Heart left ventricle (tissue), 16 donors: ENCODE measurements at regions of chr14 and their contacts with region 1.

Region 1: GRCh38 chr14:68248481-68249255 is 429.1 kb downstream of the RAD51B start:
- DNase-seq: peak in 3 of 5 donors; percentile 32 to 66 (median 39)
- ATAC-seq: peak; percentile 56 to 75 (median 70)
- H3K4me3 ChIP-seq: no peak overlapping the region
- H3K27ac ChIP-seq: peak overlapping the region in 11 of 12 donors; percentile 23 to 91 (median 85)
- H3K4me1 ChIP-seq: peaks cover 17 to 84% (median 78%) of the 10 kb centered on the region in 12 donors
- H3K27me3 ChIP-seq: no peaks in the 10 kb centered on the region
- CTCF ChIP-seq: peak; percentile 54 to 80 (median 68)
- POLR2A ChIP-seq: no peak

Region 2: DNA sequence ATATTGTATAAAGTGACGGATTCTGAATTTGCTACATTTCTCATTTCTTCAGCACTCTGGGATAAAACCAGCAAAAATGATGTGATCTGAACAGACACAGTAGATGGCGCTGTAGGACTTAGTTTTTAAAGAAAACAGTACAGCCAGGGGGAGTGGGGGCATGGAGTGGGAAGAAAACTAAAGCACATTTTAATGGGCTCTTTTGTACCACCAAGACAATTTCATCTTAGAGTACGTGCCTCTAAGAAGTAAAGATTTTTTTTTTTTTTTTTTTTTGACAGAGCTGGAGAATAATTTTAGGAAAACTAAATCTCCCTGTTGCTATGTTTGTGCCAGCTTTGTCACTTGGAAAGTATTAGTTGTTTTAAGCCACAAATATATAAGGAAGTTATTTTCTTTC is 304.7 kb before region 1 on chr14:
- intact Hi-C with region 1: loop called in 9 of 10 experiments (anchors 2 to 5 kb)
- DNase-seq: peak in 4 of 5 donors; percentile 70 to 76 (median 72)
- ATAC-seq: peak; percentile 44 to 76 (median 68)
- H3K4me3 ChIP-seq: no peak overlapping the region
- H3K27ac ChIP-seq: peak overlapping the region in 5 of 12 donors; percentile 16 to 82 (median 47)
- H3K4me1 ChIP-seq: peaks cover 0 to 49% (median 23%) of the 10 kb centered on the region in 12 donors
- H3K27me3 ChIP-seq: no peaks in the 10 kb centered on the region
- CTCF ChIP-seq: peak; percentile 58 to 82 (median 76)
- POLR2A ChIP-seq: no peak

Region 3: GRCh38 chr14:68359837-68360552 is 111.3 kb after region 1 on chr14:
- intact Hi-C with region 1: loop called in 1 of 10 experiments (anchors 10 kb)
- DNase-seq: peak; percentile 37 to 71 (median 56)
- ATAC-seq: peak; percentile 69 to 88 (median 75)
- H3K4me3 ChIP-seq: no peak overlapping the region
- H3K27ac ChIP-seq: peak overlapping the region in 10 of 12 donors; percentile 35 to 85 (median 58)
- H3K4me1 ChIP-seq: peaks cover 0 to 60% (median 13%) of the 10 kb centered on the region in 12 donors
- H3K27me3 ChIP-seq: no peaks in the 10 kb centered on the region
- CTCF ChIP-seq: no peak
- POLR2A ChIP-seq: no peak

Region 4: GRCh38 chr14:68426661-68427549 is 178.2 kb after region 1 on chr14:
- intact Hi-C with region 1: no loop called
- DNase-seq: no peak
- ATAC-seq: peak in 1 of 4 donors; percentile 15
- H3K4me3 ChIP-seq: no peak overlapping the region
- H3K27ac ChIP-seq: no peak overlapping the region
- H3K4me1 ChIP-seq: peaks cover 0 to 6% (median 0%) of the 10 kb centered on the region in 12 donors
- H3K27me3 ChIP-seq: no peaks in the 10 kb centered on the region
- CTCF ChIP-seq: no peak
- POLR2A ChIP-seq: no peak

Region 5: DNA sequence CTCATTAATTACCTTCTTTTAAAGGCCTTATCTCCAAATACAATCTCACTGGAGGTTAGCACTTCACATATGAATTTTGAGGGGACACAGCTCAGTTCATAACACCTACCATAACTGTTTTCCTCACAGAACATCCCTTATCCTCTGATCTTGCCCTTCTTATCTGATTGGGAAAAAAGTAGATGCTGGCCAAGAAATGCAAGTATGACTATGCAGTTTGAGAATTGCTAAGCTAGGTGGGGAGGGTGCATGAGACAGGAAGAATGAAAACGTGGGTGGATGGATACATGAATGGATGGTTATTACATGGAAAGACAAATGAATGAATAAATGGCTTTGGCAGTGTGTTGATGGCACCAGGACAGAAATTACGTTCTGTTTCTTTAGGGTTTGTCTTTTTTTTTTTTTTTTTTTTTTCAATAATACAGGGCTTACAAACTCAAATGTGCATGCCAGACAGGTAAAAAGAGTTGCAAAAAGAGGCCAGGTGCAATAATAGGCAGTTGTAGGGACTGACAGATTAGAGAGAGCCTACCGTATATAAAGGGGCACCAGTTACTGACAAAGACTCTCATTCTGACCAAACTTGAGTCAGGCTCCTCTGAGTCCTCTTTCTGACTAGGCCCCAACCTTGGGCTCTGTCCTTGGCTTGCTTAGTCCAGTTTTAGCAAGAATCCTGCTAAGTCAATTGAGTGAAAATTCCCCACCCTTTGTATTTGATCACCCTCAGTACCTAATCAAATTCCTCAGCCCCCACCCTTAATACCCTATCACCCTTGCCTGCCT is 239.3 kb after region 1 on chr14:
- intact Hi-C with region 1: loop called in 1 of 10 experiments (anchors 10 kb)
- DNase-seq: no peak
- ATAC-seq: no peak
- H3K4me3 ChIP-seq: no peak overlapping the region
- H3K27ac ChIP-seq: no peak overlapping the region
- H3K4me1 ChIP-seq: peaks cover 0 to 23% (median 4%) of the 10 kb centered on the region in 12 donors
- H3K27me3 ChIP-seq: no peaks in the 10 kb centered on the region
- CTCF ChIP-seq: no peak
- POLR2A ChIP-seq: no peak

Region 6: DNA sequence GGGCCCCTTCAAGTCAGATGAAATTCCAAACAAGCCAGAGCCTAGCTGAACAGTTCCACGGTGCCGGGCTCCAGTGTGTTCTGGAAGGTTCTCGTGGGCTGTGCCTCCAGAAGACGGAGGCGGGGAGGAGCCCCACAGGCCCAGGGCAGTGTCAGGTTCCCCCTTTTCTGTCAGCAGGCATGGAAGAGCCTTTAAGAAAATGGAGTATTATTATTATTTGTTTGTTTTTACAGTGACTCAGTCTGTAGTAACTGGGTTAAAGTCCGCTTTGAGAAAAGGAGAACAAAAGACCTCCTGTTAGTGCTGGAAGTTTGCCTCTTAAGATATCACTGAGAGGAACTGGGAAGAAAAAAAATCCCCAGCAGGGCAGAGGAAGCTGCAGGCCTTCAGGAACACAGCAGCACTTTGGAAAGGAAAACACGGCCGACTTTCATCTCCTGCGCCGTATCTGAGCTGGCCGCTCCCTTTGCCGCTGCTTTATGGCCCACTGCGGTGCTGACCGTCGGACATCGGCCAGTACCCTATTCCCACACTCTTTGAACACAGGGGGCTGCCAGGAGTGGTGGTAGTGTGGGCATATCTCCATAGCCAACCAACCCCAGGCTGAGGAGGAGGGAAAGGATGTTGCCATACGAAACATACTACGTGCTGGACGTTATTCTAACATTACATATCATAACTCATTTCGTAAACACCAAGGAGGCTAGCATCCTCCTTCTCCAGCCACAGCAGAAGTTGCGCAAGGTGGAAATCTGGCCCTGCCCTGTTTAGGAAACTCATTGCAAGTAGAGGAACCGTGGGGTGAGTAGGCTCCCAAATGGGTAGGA is 350.2 kb after region 1 on chr14:
- intact Hi-C with region 1: loop called in 1 of 10 experiments (anchors 10 kb)
- DNase-seq: peak; percentile 72 to 82 (median 77)
- ATAC-seq: peak; percentile 63 to 95 (median 92)
- H3K4me3 ChIP-seq: peak overlapping the region in 4 of 12 donors; percentile 6 to 30 (median 9)
- H3K27ac ChIP-seq: peak overlapping the region; percentile 59 to 98 (median 91)
- H3K4me1 ChIP-seq: peaks cover 0 to 70% (median 21%) of the 10 kb centered on the region in 12 donors
- H3K27me3 ChIP-seq: no peaks in the 10 kb centered on the region
- CTCF ChIP-seq: no peak
- POLR2A ChIP-seq: no peak

Region 7: GRCh38 chr14:68788996-68789820 is 540.5 kb after region 1 on chr14:
- intact Hi-C with region 1: loop called in 9 of 10 experiments (anchors 1 to 10 kb)
- DNase-seq: peak; percentile 86 to 91 (median 88)
- ATAC-seq: peak in 3 of 4 donors; percentile 34 to 36 (median 35)
- H3K4me3 ChIP-seq: peak overlapping the region; percentile 60 to 94 (median 84)
- H3K27ac ChIP-seq: peak overlapping the region; percentile 98 to 100 (median 99)
- H3K4me1 ChIP-seq: peaks cover 0 to 48% (median 25%) of the 10 kb centered on the region in 12 donors
- H3K27me3 ChIP-seq: no peaks in the 10 kb centered on the region
- CTCF ChIP-seq: peak; percentile 55 to 83 (median 78)
- POLR2A ChIP-seq: no peak